Dendritic cell treated with granulocyte-macrophage colony-stimulating factor and Interleukin-4, amounts not matched to agents 40 ng/mL and 50 ng/mL, for 4 days (primary cell): ENCODE measurements at regions of chr10 and their contacts with region 1.

Region 1: GRCh38 chr10:3776796-3777571 is 8.0 kb downstream of the KLF6 start:
- H3K4me3 Mint-ChIP-seq: peak overlapping the region; percentile 56
- H3K27ac Mint-ChIP-seq: peak overlapping the region; percentile 99
- H3K4me1 Mint-ChIP-seq: peaks cover 66% of the 10 kb centered on the region
- H3K27me3 Mint-ChIP-seq: no peaks in the 10 kb centered on the region

Region 2: DNA sequence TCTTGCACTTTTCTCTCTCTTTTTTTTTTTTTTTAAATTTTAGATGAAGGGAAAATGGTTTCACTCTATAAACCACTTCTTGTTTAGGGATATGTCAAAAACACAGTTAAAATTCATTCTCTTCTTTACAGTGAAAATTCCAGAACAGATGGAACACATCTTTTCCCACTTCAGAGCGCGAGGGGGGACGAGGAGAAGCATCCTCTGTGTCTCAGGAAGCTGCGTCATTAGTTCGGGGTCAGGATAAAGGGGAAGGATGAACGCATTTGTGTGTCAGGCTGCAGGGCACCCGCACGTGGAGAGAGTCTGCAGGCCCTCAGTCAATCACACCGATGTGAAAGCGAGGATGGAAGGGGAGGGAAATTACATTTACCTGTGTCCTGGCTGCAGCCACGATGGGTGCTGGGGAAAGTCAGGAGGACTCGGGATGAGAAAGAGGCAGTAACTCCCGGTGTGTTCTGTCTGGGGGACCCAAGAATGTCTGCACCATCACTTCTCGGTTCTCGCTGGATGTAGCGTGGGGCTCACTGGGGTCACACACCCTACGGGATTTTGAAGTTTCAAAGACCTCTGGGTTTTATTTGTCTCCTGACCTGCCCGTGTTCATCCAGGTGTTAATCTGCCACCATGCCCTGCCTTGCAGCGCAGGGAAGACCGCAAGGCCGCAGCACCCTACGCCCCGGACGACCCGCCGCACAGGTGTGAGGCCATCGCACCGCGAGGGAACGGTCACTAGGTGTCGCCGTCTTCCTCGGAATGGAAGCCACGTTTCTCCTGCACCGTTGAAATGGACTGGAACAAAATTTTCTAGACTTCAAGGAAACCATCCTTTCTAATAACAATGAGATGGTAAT is 537.7 kb before region 1 on chr10:
- intact Hi-C with region 1: loop called (anchors 5 kb)
- H3K4me3 Mint-ChIP-seq: no peak overlapping the region
- H3K27ac Mint-ChIP-seq: no peak overlapping the region
- H3K4me1 Mint-ChIP-seq: peaks cover 5% of the 10 kb centered on the region
- H3K27me3 Mint-ChIP-seq: peaks cover 40% of the 10 kb centered on the region